Spleen (tissue), 13 donors: ENCODE measurements at regions of chr11 and their contacts with region 1.

Region 1: GRCh38 chr11:84524422-84525051 is 1102.6 kb downstream of the DLG2 start:
- DNase-seq: no peak
- H3K4me3 ChIP-seq: no peak overlapping the region
- H3K27ac ChIP-seq: no peak overlapping the region
- H3K4me1 ChIP-seq: peaks cover 0 to 3% (median 0%) of the 10 kb centered on the region in 6 donors
- H3K27me3 ChIP-seq: no peaks in the 10 kb centered on the region
- CTCF ChIP-seq: peak in 3 of 11 experiments; percentile 32 to 38 (median 34)
- POLR2A ChIP-seq: no peak

Region 2: GRCh38 chr11:83836883-83837654 is 687.5 kb before region 1 on chr11:
- intact Hi-C with region 1: loop called (anchors 10 kb)
- DNase-seq: no peak
- H3K4me3 ChIP-seq: no peak overlapping the region
- H3K27ac ChIP-seq: no peak overlapping the region
- H3K4me1 ChIP-seq: no peaks in the 10 kb centered on the region
- H3K27me3 ChIP-seq: peaks cover 0 to 8% (median 0%) of the 10 kb centered on the region in 7 donors
- CTCF ChIP-seq: peak in 8 of 11 experiments; percentile 18 to 62 (median 40)
- POLR2A ChIP-seq: no peak

Region 3: GRCh38 chr11:84234011-84234410 is 290.5 kb before region 1 on chr11:
- intact Hi-C with region 1: no loop called
- DNase-seq: no peak
- H3K4me3 ChIP-seq: no peak overlapping the region
- H3K27ac ChIP-seq: no peak overlapping the region
- H3K4me1 ChIP-seq: no peaks in the 10 kb centered on the region
- H3K27me3 ChIP-seq: no peaks in the 10 kb centered on the region
- CTCF ChIP-seq: no peak
- POLR2A ChIP-seq: no peak

Region 4: DNA sequence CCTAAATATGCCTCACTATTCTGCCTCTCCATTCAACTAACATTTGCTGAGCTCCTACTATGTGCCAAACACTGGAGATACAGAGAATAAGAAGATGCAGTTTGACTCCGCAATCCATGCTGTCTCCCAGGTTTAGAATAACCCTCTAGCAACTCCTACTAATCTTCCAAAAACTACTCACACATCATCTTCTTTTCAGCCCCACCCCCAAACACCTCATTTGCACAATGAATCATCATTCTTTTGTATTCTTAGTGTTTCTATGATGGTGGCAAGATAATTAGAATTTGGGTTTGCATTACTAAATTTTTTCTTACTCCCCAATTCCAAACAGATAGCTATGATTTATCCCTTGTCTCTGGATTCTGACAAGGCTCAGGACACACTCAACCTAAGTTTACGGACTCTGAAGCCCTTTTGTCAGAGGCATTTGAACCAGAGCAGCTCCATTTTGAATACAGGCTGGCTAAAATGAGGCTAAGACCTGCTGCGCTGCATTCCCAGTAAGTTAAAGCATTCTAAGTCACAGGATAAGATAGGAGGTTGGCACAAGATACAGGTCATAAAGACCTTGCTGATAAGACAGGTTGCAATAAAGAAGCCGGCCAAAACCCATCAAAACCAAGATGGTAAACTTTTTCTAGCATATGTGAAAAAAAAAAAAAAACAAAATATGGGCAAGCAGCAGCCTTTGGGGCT is 63.7 kb after region 1 on chr11:
- intact Hi-C with region 1: no loop called
- DNase-seq: no peak
- H3K4me3 ChIP-seq: no peak overlapping the region
- H3K27ac ChIP-seq: no peak overlapping the region
- H3K4me1 ChIP-seq: no peaks in the 10 kb centered on the region
- H3K27me3 ChIP-seq: no peaks in the 10 kb centered on the region
- CTCF ChIP-seq: no peak
- POLR2A ChIP-seq: no peak